ENCODE measurements at regions of chr6 and their contacts with region 1.

Region 1: DNA sequence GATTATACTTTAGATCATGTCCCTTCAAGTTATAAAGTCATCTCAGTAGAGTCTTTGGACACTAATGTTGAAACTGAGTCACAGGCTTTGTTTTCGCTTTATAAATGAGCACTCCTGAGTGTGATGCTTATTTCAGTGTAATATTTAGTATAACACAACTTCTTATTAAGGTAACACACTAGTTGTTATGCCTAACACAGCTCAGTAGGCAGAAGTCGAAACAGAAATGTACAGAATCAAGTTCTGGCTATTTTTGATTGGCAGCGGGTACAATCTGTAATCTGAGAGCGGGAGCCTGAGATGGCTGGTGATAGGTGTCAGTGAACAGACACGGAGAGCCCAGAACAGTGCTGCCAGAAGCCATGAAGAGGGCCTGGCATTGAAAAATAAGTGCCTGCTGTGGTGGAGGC is 11.4 kb downstream of the HECA start:
- DNase-seq: no peak
- H3K4me3 Mint-ChIP-seq: peak overlapping the region; percentile 61
- H3K27ac Mint-ChIP-seq: peak overlapping the region; percentile 95
- H3K4me1 Mint-ChIP-seq: peaks cover 91% of the 10 kb centered on the region
- H3K27me3 Mint-ChIP-seq: no peaks in the 10 kb centered on the region

Region 2: DNA sequence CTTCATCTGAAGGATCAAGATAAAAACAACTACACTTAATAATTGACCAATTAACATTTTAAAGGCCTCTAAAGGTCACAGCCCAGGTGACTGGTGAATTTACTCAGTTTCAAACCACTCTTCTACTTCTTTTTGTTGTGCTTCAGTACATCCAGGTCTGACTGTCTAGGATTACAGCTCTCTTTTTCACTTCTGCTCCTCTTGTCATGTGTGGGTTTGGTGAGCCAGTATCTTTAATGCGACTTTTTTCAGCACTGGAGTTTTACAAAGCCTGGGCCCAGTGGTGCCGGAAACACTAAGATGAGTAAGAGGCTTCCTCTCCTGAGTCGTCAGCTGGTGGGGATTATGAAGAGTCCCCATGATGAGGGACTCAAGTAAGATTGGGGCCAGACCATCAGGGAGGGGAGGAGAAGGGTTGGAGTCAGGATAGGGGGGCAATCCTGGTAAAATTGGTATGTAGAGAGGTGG is 15.5 kb after region 1 on chr6:
- CTCF ChIA-PET with region 1: interaction called, 23 read pairs
- intact Hi-C with region 1: loop called (anchors 1 kb)
- DNase-seq: peak; percentile 88
- H3K4me3 Mint-ChIP-seq: peak overlapping the region; percentile 39
- H3K27ac Mint-ChIP-seq: peak overlapping the region; percentile 92
- H3K4me1 Mint-ChIP-seq: peaks cover 91% of the 10 kb centered on the region
- H3K27me3 Mint-ChIP-seq: no peaks in the 10 kb centered on the region

Region 3: DNA sequence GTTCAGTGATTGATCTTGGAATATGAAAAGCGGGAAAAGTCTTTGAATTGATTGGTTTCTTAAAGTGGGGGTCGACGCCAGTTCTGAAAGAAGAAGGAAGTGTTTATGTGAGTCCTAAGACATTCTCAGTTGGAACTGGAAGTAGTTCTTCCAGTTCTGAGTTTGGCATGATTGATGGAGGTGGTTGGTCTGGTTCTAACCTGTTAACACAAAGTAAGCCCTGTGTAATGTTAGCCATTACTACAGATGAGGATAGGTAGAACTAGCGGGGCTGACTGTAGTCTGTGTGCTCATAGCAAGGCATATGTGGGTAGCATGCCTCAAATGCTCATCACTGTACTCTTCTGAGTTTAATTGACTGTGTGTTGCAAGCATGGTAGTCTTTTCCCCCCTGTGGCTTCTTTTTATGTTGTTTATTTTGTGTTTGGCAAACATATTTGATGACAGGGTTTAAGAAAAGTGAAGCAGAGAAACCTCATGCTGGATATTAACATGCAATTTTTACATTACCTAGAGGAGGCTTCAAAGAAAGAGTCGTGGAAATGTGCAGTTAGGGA is 203.2 kb after region 1 on chr6:
- CTCF ChIA-PET with region 1: no interaction called
- intact Hi-C with region 1: no loop called
- DNase-seq: no peak
- H3K4me3 Mint-ChIP-seq: no peak overlapping the region
- H3K27ac Mint-ChIP-seq: no peak overlapping the region
- H3K4me1 Mint-ChIP-seq: peaks cover 4% of the 10 kb centered on the region
- H3K27me3 Mint-ChIP-seq: no peaks in the 10 kb centered on the region

Measured in activated naive CD4-positive, alpha-beta T cell treated with anti-CD3 and anti-CD28 coated beads for 36 hours (primary cell).